ENCODE measurements at regions of chr14 and their contacts with region 1.

Region 1: DNA sequence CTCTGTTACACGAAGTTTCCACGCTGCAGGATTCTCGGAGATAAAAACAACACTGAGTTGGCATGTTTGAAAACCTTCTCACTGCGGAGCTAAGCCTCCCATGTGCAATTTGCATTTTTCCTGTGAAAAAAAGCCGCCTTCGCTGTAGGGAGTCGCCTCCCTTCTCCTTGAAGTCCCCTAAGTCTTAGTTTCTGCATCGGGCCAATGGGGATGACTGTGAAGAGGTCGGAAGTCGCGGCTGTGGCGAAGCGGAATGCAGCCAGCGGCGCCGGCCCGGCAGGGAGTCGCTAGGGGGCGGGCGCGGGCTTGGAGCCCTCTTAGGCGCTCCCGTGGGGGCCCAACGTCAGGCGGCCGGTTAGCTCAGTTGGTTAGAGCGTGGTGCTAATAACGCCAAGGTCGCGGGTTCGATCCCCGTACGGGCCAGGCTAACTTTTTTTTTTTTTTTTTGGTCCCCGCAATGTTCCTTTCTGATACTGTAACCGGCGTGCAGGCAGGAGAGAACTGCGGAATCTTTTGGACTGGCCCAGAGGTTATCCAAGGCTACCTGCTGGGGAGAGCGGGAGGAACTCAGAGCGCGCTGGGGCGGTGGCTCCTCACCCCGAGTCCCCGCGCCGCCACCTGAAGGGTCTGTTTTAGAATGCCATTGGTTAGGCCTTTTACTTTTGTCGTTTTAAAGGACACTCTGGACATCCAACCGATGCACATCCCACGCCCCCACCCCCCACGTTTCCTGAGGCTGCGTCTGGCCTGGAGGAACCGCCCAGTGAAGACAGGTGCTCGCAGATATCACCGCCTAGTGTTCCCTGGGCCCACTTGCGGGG is 2.6 kb upstream of the ZNF839 start:
- DNase-seq: peak; percentile 61
- ATAC-seq: peak; percentile 79
- H3K4me3 ChIP-seq: peak overlapping the region; percentile 57 to 75
- H3K27ac ChIP-seq: peak overlapping the region; percentile 87
- H3K4me1 ChIP-seq: peaks cover 25% of the 10 kb centered on the region
- H3K27me3 ChIP-seq: no peaks in the 10 kb centered on the region
- CTCF ChIP-seq: peak; percentile 69

Region 2: GRCh38 chr14:101964297-101965144 is 352.4 kb before region 1 on chr14 and contains the start of gene DYNC1H1:
- CTCF ChIA-PET with region 1: interaction called, 3 read pairs
- POLR2A ChIA-PET with region 1: no interaction called
- in situ Hi-C with region 1: no loop called
- intact Hi-C with region 1: loop called (anchors 10 kb)
- DNase-seq: no peak
- ATAC-seq: peak; percentile 87
- H3K4me3 ChIP-seq: peak within 1 kb of the TSS; percentile 87
- H3K27ac ChIP-seq: peak within 1 kb of the TSS; percentile 86
- H3K4me1 ChIP-seq: peaks cover 12% of the 10 kb centered on the region
- H3K27me3 ChIP-seq: no peaks in the 10 kb centered on the region
- CTCF ChIP-seq: no peak
- total RNA-seq, gene DYNC1H1: 382 TPM

Region 3: GRCh38 chr14:102209217-102209966 is 107.6 kb before region 1 on chr14:
- CTCF ChIA-PET with region 1: interaction called, 7 read pairs
- POLR2A ChIA-PET with region 1: no interaction called
- in situ Hi-C with region 1: loop called (anchors 25 kb)
- intact Hi-C with region 1: no loop called
- DNase-seq: no peak
- ATAC-seq: peak; percentile 74
- H3K4me3 ChIP-seq: no peak overlapping the region
- H3K27ac ChIP-seq: no peak overlapping the region
- H3K4me1 ChIP-seq: no peaks in the 10 kb centered on the region
- H3K27me3 ChIP-seq: no peaks in the 10 kb centered on the region
- CTCF ChIP-seq: no peak

Region 4: DNA sequence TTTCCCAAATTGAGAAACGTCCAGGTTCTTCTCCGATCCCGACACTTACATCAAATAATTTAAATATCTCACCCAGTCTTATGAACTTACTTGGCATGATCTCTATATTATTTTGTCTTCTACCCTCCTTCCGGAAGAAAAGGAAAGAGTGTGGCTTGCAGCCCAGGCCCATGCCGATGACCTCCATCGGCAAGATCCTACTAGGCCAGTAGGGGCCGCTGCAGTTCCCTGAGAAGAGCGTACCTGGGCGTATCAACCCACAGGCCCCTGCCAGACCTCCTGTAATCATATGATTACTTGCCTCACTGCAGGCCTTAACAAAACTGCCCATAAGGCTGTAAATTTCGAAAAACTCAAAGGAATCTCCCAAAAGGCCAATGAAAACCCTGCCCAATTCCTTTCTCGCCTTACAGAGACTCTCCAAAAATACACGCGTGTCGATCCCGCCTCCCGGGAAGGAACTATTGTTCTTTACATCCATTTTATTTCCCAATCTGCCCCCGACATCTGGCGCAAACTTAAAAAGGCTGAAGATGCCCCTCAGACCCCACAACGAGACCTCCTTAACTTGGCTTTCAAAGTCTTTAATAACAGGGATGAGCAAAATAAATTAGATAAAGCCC is 81.6 kb before region 1 on chr14:
- CTCF ChIA-PET with region 1: interaction called, 8 read pairs
- POLR2A ChIA-PET with region 1: no interaction called
- in situ Hi-C with region 1: no loop called
- intact Hi-C with region 1: loop called (anchors 1 kb)
- DNase-seq: peak; percentile 32
- ATAC-seq: peak; percentile 94
- H3K4me3 ChIP-seq: no peak overlapping the region
- H3K27ac ChIP-seq: no peak overlapping the region
- H3K4me1 ChIP-seq: no peaks in the 10 kb centered on the region; the same call in none of the 2 replicates
- H3K27me3 ChIP-seq: no peaks in the 10 kb centered on the region
- CTCF ChIP-seq: peak; percentile 87

Region 5: DNA sequence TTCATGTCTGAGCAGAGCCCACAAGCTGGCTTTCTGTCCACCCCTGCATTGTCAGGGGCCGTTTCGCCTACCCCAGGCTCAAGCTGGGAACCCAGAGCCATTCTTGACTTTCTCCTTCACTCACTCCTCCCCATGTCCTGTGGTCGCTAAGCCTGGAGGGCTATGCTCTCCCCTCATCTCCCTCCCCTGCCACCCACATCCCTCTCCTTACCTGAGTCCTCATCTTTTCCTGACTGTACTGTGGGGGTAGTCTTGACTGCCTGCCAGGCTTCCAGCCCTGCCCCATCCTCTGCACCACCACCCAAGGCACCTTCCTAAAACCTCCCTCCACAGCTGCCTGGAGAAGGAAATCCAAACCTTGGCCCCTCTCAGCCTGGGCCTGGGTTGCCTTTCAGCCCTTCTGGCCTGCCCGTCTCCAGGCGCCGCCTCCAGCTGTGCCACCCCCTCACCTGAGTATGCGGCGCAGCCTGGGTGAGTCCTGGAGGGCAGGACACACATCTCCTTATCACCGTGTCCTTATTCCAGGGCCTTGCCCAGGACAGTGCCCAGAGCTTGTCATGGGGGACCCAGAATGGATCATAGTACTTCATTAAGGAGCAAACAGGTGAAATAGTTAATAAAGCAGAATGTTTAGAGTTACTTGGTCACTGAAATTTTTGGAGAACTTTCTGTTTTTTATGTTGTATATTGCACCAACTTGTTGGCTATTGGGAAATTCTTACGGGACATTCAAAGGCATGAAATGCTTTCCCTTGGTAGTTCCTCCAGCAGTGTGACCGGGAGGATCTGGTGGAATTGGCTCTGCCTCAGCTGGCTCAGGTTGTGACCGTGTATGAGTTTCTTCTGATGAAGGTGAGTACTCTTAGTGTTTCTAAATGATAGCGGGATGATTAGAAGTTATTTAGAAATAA is 17.1 kb after region 1 on chr14:
- CTCF ChIA-PET with region 1: no interaction called
- POLR2A ChIA-PET with region 1: interaction called, 17 read pairs
- in situ Hi-C with region 1: no loop called
- intact Hi-C with region 1: no loop called
- DNase-seq: no peak
- ATAC-seq: no peak
- H3K4me3 ChIP-seq: no peak overlapping the region
- H3K27ac ChIP-seq: no peak overlapping the region
- H3K4me1 ChIP-seq: no peaks in the 10 kb centered on the region
- H3K27me3 ChIP-seq: no peaks in the 10 kb centered on the region
- CTCF ChIP-seq: no peak

Measured in Panc1 (cell line).